ENCODE measurements at regions of chr7 and their contacts with region 1.

Region 1: DNA sequence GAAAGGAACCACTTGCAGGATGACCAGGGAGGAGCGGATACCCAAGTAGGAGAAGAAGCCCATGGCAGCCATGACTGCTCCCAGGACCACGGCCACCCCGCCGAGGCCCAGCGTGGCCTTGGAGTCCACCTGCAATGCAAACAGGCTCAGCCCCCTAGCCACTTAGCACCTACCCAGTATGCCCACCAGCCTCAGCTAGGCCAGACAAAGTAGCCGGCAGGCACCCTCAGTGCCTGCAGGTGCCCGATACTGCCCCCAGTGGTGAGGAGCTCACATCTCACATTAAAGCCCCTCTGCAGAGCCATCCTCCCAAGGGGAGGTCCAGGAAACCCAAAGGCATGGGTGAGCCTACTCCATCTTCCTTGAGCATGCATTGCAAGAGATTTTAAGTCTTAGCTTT is 6.6 kb downstream of the NPC1L1 start:
- DNase-seq: peak; percentile 70
- ATAC-seq: peak; percentile 98
- H3K4me3 Mint-ChIP-seq: no peak overlapping the region
- H3K27ac Mint-ChIP-seq: no peak overlapping the region
- H3K4me1 Mint-ChIP-seq: no peaks in the 10 kb centered on the region
- H3K27me3 Mint-ChIP-seq: no peaks in the 10 kb centered on the region
- CTCF ChIP-seq: peak; percentile 73

Region 2: DNA sequence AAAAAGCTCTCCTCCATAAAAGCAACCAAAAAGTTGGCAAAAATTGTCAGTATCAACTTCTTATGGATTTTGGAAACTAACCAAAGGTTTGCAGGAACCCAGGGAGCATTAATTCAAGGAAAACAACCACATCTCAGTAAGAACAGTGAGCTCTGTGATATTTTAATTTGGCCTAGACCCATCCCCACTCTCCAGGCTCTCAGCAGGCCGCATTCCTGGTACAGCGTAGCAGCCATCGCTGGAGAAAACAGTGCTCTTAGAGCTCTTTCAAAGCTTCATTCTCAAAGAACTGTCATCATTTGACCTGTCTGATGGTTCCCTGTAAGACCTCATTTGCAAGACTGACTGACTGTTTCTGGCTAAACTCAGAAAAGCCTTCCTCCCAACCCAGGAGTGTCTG is 125.9 kb before region 1 on chr7:
- CTCF ChIA-PET with region 1: interaction called, 10 read pairs
- POLR2A ChIA-PET with region 1: no interaction called
- intact Hi-C with region 1: no loop called
- DNase-seq: no peak
- ATAC-seq: no peak
- H3K4me3 Mint-ChIP-seq: no peak overlapping the region
- H3K27ac Mint-ChIP-seq: no peak overlapping the region
- H3K4me1 Mint-ChIP-seq: peaks cover 15% of the 10 kb centered on the region
- H3K27me3 Mint-ChIP-seq: no peaks in the 10 kb centered on the region
- CTCF ChIP-seq: no peak

Region 3: GRCh38 chr7:44505595-44505994 is 28.9 kb before region 1 on chr7:
- CTCF ChIA-PET with region 1: no interaction called
- POLR2A ChIA-PET with region 1: no interaction called
- intact Hi-C with region 1: no loop called
- DNase-seq: peak; percentile 37
- ATAC-seq: no peak
- H3K4me3 Mint-ChIP-seq: no peak overlapping the region
- H3K27ac Mint-ChIP-seq: no peak overlapping the region
- H3K4me1 Mint-ChIP-seq: peaks cover 12% of the 10 kb centered on the region
- H3K27me3 Mint-ChIP-seq: peaks cover 4% of the 10 kb centered on the region
- CTCF ChIP-seq: no peak

Region 4: DNA sequence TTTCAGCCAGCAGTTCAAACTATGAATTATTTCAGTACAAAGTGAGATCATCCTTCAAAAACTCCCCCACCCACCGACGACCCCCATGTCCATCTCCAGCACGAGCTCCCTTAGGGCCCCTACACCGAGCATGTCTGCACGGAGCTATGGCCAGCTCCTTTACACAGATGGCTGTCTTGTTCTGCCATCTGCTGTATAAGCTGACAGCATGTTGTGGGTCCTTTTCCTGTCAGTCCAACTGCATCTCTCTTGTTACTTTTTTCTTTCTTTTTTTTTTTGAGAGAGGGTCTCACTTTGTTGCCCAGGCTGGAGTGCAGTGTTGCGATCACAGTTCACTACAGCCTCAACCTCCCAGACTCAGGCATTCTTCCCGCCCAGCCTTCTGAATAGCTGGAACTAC is 15.0 kb before region 1 on chr7:
- CTCF ChIA-PET with region 1: interaction called, 19 read pairs
- POLR2A ChIA-PET with region 1: no interaction called
- intact Hi-C with region 1: no loop called
- DNase-seq: no peak
- ATAC-seq: no peak
- H3K4me3 Mint-ChIP-seq: no peak overlapping the region
- H3K27ac Mint-ChIP-seq: no peak overlapping the region
- H3K4me1 Mint-ChIP-seq: no peaks in the 10 kb centered on the region
- H3K27me3 Mint-ChIP-seq: no peaks in the 10 kb centered on the region
- CTCF ChIP-seq: no peak

Region 5: GRCh38 chr7:44547536-44548231 is 13.2 kb after region 1 on chr7:
- CTCF ChIA-PET with region 1: interaction called, 17 read pairs
- POLR2A ChIA-PET with region 1: no interaction called
- intact Hi-C with region 1: no loop called
- DNase-seq: no peak
- ATAC-seq: no peak
- H3K4me3 Mint-ChIP-seq: no peak overlapping the region
- H3K27ac Mint-ChIP-seq: no peak overlapping the region
- H3K4me1 Mint-ChIP-seq: peaks cover 9% of the 10 kb centered on the region
- H3K27me3 Mint-ChIP-seq: no peaks in the 10 kb centered on the region
- CTCF ChIP-seq: peak; percentile 23

Measured in activated CD8-positive, alpha-beta T cell treated with anti-CD3 and anti-CD28 coated beads for 36 hours (primary cell).